Activated T-helper 2 cell treated with anti-CD3 and anti-CD28 coated beads, Interferon-gamma antibody, Interleukin-2, Interleukin-4, amounts not matched to agents 10 μg/mL and 5 μg/mL and 100 μg/mL, durations not matched to agents 14 hours and 24 hours and 36 hours (primary cell): ENCODE measurements at regions of chr14 and their contacts with region 1.

Region 1: DNA sequence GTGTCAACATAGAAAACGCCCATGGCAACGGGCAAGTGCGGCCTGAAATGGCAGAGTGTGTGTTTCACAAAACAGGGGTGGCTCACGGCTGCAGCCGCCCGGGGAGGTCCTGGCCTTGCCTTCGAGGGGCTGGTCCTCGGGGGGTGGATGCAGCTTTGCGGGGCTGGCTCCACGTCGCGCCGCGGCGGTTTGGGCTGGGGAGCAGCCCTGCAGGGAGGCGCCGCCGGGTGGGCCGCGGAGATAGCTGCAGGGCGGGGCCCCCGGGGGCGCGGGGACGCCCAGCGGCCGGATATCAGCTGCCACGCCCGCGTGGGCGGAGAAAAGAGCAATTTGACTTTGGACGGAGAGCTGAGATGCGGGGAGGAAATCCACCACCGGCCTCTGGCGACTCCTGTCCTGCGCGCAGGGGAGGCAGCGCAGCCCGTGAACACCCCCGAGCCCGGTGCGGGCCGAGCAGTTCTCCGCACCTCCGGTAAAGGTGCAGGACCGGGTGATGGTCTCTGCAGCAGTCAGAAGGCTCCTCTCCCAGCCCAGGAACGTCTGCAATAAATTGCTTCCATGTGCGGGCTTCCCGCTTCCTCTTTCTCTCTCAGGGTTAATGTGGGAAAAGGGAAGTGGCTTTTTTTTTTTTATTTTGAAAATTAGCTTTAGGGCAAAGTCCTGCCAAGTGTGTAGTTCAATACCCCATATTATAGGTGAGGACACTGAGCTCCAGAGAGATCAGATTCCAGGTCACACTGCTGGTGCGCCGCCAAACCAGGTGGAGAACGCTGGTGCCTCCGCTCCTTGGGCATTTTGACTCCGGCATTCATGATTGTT is 110.5 kb downstream of the ARF6 start:
- DNase-seq: peak; percentile 76
- H3K4me3 Mint-ChIP-seq: peak overlapping the region; percentile 83
- H3K27ac Mint-ChIP-seq: peak overlapping the region; percentile 98
- H3K4me1 Mint-ChIP-seq: peaks cover 34% of the 10 kb centered on the region
- H3K27me3 Mint-ChIP-seq: no peaks in the 10 kb centered on the region

Region 2: GRCh38 chr14:49620182-49621113 is 383.0 kb before region 1 on chr14 and contains the starts of genes MGAT2 and RPL36AL:
- intact Hi-C with region 1: loop called (anchors 1 kb)
- DNase-seq: peak; percentile 96
- H3K4me3 Mint-ChIP-seq: peak within 1 kb of the TSS; percentile 91
- H3K27ac Mint-ChIP-seq: peak within 1 kb of the TSS; percentile 94
- H3K4me1 Mint-ChIP-seq: peaks cover 44% of the 10 kb centered on the region
- H3K27me3 Mint-ChIP-seq: no peaks in the 10 kb centered on the region
- total RNA-seq, gene MGAT2: 57.0 and 57.9 TPM in 2 replicates
- total RNA-seq, gene RPL36AL: 278 and 292 TPM in 2 replicates

Region 3: DNA sequence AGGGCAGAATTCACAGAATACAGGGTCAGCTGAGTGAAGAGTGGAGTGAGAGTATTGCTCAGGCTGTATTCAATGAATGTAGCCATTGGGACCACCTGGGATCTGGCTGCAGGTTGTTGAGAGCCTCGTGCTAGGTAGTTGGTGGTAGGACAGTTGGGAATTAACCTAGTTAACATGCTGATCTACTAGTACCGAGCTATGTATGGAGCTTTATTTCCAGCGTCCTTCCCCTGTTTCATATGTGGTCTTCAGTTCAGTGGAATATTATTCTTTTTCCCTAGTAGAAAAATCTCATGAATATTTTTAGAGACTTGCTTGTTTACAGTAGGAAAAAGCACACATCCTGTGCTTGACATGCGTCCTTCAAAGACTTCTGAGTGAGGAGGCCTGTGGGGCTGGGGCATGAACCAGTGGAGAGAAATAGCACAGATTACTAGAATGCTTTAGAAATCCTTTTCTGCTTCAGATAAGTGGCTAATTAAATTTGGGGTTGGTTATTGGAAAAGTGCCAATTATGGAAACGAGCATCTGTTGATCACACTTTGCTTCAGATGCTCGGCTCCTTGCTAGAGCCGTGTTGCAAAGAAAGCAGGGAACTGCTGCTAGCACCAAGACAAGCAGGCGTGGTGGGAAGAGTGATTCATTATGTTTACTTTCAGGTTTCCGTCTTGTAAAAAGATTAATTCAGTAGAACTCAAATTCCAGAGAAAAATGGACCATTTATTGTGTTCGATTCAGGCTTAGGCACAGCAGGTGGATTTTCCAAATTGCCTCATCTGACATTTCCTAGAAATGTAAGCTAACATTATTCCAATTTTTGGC is 56.9 kb before region 1 on chr14:
- intact Hi-C with region 1: loop called (anchors 2 kb)
- DNase-seq: no peak
- H3K4me3 Mint-ChIP-seq: peak overlapping the region; percentile 42
- H3K27ac Mint-ChIP-seq: peak overlapping the region; percentile 73
- H3K4me1 Mint-ChIP-seq: peaks cover 57% of the 10 kb centered on the region
- H3K27me3 Mint-ChIP-seq: no peaks in the 10 kb centered on the region

Region 4: GRCh38 chr14:49984424-49984823 is 19.0 kb before region 1 on chr14:
- intact Hi-C with region 1: loop called (anchors 1 kb)
- DNase-seq: no peak
- H3K4me3 Mint-ChIP-seq: no peak overlapping the region
- H3K27ac Mint-ChIP-seq: peak overlapping the region; percentile 82
- H3K4me1 Mint-ChIP-seq: peaks cover 31% of the 10 kb centered on the region
- H3K27me3 Mint-ChIP-seq: no peaks in the 10 kb centered on the region

Region 5: DNA sequence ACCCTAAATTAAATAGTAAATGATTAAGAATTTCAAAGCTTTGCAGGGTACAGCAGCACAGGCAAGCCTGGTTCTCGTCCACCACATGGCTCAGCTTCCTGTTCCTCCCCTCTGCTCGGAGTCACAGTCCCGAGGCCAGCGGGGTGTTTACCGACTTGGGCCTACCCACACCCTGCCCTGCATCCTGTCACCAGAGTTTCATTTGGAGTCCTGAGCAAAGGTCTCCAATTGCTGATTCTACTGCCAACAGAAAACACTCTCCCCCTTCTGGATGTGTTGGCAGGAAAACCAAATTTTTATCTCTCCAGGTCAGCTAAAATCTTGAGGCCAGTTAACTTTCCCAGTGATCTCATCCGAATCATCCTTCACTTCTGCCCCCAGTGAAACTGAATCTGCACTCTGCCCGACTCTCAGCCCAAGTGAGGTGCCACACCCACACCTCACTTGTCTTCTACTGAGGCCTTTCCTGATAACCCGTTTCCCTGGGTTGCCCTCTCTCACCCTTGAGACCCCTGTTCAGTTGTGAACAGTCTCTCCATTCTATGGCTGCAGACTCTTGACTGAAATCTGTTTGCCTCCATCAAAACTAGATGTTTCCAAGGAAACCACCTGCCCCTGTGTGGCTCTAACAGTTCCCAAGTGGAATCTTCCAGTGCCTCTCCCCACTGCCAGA is 41.8 kb after region 1 on chr14:
- intact Hi-C with region 1: loop called (anchors 1 kb)
- DNase-seq: peak; percentile 75
- H3K4me3 Mint-ChIP-seq: no peak overlapping the region
- H3K27ac Mint-ChIP-seq: peak overlapping the region; percentile 88
- H3K4me1 Mint-ChIP-seq: peaks cover 50% of the 10 kb centered on the region
- H3K27me3 Mint-ChIP-seq: no peaks in the 10 kb centered on the region

Region 6: GRCh38 chr14:50089208-50089607 is 85.8 kb after region 1 on chr14:
- intact Hi-C with region 1: no loop called
- DNase-seq: no peak
- H3K4me3 Mint-ChIP-seq: no peak overlapping the region
- H3K27ac Mint-ChIP-seq: peak overlapping the region; percentile 27
- H3K4me1 Mint-ChIP-seq: peaks cover 75% of the 10 kb centered on the region
- H3K27me3 Mint-ChIP-seq: no peaks in the 10 kb centered on the region

Region 7: DNA sequence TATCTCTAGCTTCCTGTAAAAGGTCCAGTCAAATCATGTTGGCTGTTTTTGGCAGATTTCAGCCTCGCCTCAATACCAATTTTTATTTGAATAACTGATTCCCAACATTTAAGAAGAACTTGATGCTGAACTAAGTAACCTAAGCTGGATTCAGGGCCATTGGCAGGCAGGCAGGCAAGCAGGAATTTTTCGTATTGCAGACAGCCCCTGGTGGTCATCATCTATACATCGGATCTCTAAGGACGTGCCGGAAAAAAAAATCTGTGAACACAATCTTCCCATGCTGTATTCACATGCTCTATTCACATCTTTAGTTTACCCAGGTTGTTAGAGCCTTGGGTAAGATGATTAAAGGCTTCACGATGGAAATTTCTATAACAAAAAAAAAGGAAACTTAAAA is 105.9 kb after region 1 on chr14:
- intact Hi-C with region 1: loop called (anchors 1 kb)
- DNase-seq: no peak
- H3K4me3 Mint-ChIP-seq: no peak overlapping the region
- H3K27ac Mint-ChIP-seq: no peak overlapping the region
- H3K4me1 Mint-ChIP-seq: peaks cover 20% of the 10 kb centered on the region
- H3K27me3 Mint-ChIP-seq: no peaks in the 10 kb centered on the region

Region 8: DNA sequence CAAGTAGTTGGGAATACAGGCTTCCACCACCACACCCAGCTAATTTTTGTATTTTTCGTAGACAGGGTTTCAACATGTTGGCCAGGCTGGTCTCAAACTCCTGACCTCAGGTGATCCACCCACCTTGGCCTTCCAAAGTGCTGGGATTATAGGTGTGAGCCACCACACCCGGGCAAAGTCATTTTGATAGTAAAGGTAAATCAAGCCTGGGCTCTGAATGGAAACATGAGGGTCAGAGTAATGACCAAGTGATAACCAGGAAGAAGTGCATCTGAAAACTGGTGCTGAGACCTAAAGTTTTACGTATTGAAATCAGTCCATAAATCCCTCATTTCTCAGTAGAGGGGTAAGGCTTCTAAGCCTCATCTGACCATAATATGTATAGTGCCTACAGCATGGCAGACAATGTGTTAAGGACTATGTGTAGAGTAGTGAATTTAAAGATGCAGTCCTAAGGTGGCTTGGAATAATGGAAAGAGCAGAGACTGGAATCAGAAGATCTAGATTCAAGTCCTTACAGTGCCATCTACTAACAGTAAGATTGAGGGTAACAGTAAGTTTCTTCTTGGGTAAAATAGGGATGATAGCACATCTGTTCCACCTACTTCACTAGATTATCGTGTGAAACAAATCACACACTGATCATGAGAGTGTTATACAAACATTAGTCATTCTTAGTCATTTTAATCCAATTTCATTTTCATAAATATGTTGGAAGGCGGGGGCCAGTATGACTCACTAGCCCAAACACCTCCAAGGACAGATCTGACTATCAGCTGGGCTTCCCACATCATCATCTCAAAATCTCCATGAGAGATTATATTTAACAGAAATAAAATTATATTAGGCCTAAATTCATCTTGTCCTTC is 517.8 kb after region 1 on chr14:
- intact Hi-C with region 1: loop called (anchors 5 kb)
- DNase-seq: no peak
- H3K4me3 Mint-ChIP-seq: no peak overlapping the region
- H3K27ac Mint-ChIP-seq: peak overlapping the region; percentile 91
- H3K4me1 Mint-ChIP-seq: peaks cover 43% of the 10 kb centered on the region
- H3K27me3 Mint-ChIP-seq: no peaks in the 10 kb centered on the region